Dorsolateral prefrontal cortex (tissue), 120 donors: ENCODE measurements at regions of chr6 and their contacts with region 1.

Region 1: DNA sequence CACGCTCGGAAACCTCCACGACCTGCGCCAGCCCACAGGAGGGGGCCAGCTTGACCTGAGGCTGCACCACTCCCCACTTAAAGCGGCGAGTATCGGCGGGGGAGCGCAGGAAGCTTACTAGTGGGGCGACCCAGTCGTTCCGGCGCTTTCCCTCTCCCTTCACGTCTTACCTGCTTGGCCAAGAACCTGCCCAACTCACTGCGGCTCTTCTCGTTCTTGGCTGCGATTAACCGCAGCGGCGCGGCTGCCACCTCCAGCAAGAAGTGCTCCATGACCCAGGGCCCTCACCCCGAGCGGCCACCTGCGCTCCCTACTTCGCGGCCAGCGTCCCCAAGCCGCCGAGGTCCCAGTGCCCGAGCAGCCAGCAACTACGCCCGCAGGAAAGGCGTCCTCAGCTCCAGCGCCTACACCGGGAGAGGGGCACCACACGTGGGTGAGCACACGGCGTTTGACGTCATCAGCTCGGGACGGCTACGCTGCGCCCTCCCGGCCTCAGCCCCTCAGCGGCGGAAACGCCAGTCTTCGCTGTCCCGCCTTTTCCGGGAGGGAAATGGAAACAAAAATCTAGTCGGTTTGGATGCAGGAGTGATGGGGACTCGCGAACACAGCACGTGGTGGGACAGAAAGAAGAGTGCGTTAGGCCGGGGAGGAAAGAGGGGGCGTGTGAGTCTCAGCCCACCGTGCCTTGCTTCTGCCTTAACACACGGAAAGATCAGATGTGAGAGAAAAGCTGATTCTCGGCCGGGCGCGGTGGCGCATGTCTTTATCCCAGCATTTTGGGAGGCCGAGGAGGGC is at the start of gene MDN1:
- DNase-seq: peak; percentile 83 to 95 (median 92)
- H3K4me3 ChIP-seq: peak within 1 kb of the TSS; percentile 62 to 99 (median 89)
- H3K27ac ChIP-seq: peak within 1 kb of the TSS in 58 of 59 donors; percentile 10 to 92 (median 76)
- H3K27me3 ChIP-seq: no peaks in the 10 kb centered on the region
- CTCF ChIP-seq: peak in 17 of 56 donors; percentile 4 to 47 (median 23)
- total RNA-seq, gene MDN1: 51.0 to 84.3 (median 67.6) TPM

Region 2: GRCh38 chr6:89768324-89768723 is 51.2 kb before region 1 on chr6:
- intact Hi-C with region 1: no loop called
- DNase-seq: no peak
- H3K4me3 ChIP-seq: no peak overlapping the region
- H3K27ac ChIP-seq: no peak overlapping the region
- H3K27me3 ChIP-seq: no peaks in the 10 kb centered on the region
- CTCF ChIP-seq: no peak

Region 3: DNA sequence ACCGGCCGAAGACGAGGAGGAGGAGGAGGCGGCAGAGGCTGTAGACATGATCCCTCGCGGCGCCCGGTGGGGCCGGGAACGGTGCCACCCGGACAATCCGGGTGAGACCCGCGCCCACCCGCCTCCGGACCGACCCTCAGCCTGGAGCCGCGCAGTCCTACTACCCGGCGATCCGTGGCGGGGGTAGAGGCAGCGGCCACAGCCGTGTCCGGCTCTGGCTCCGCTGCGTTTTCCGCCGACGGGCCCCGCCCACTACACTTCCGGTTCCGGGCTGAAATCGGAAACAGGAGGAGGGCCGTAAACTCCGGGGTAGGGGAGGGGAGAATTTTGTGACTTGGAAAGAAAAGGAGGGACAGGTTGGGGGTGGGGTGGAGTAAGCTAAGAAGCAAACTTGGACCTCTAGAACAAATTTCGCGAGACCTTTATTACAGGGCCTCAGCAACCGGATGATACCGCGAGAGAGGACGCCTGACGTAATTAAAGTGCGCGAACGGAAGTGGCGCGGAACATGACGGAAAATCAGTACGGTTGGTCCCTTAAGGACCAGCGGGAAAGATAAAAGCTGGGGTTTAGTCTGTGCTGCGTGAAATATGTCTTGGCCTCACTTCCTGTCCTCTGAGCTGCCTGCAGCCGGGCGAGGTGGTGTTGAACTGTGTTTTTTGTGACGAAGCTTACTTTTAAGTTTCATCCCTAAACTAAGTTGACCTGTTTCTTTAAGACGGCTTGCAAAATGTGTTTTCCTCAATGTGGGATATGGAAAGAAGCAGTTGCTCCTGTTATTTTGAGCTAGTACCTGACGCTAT is 767.5 kb after region 1 on chr6 and contains the start of gene MAP3K7:
- intact Hi-C with region 1: loop called in 1 of 2 experiments (anchors 10 kb)
- DNase-seq: peak; percentile 86 to 97 (median 94)
- H3K4me3 ChIP-seq: peak within 1 kb of the TSS; percentile 72 to 100 (median 99)
- H3K27ac ChIP-seq: peak within 1 kb of the TSS; percentile 81 to 99 (median 98)
- H3K27me3 ChIP-seq: no peaks in the 10 kb centered on the region
- CTCF ChIP-seq: peak in 8 of 56 donors; percentile 5 to 28 (median 18)
- total RNA-seq, gene MAP3K7: 23.8 to 46.7 (median 36.9) TPM